Activated T-helper 2 cell treated with anti-CD3 and anti-CD28 coated beads, Interferon-gamma antibody, Interleukin-2, Interleukin-4, amounts not matched to agents 10 μg/mL and 5 μg/mL and 100 μg/mL, durations not matched to agents 14 hours and 24 hours and 36 hours (primary cell): ENCODE measurements at regions of chr6 and their contacts with region 1.

Region 1: GRCh38 chr6:109382576-109383437 is 540 bp upstream of the CD164 start:
- DNase-seq: peak; percentile 92
- H3K4me3 Mint-ChIP-seq: peak overlapping the region; percentile 98
- H3K27ac Mint-ChIP-seq: peak overlapping the region; percentile 99
- H3K4me1 Mint-ChIP-seq: peaks cover 39% of the 10 kb centered on the region
- H3K27me3 Mint-ChIP-seq: peaks cover 3% of the 10 kb centered on the region

Region 2: GRCh38 chr6:107459283-107460082 is 1923.3 kb before region 1 on chr6 and contains the start of gene PDSS2:
- intact Hi-C with region 1: loop called (anchors 5 kb)
- DNase-seq: peak; percentile 96
- H3K4me3 Mint-ChIP-seq: peak within 1 kb of the TSS; percentile 95
- H3K27ac Mint-ChIP-seq: peak within 1 kb of the TSS; percentile 88
- H3K4me1 Mint-ChIP-seq: peaks cover 13% of the 10 kb centered on the region
- H3K27me3 Mint-ChIP-seq: peaks cover 2% of the 10 kb centered on the region
- total RNA-seq, gene PDSS2: 13.0 and 14.4 TPM in 2 replicates

Region 3: GRCh38 chr6:108558372-108559096 is 824.3 kb before region 1 on chr6:
- intact Hi-C with region 1: loop called (anchors 2 kb)
- DNase-seq: peak; percentile 95
- H3K4me3 Mint-ChIP-seq: peak overlapping the region; percentile 87
- H3K27ac Mint-ChIP-seq: peak overlapping the region; percentile 93
- H3K4me1 Mint-ChIP-seq: peaks cover 16% of the 10 kb centered on the region
- H3K27me3 Mint-ChIP-seq: peaks cover 46% of the 10 kb centered on the region

Region 4: GRCh38 chr6:109009236-109009961 is 373.4 kb before region 1 on chr6:
- intact Hi-C with region 1: loop called (anchors 1 kb)
- DNase-seq: peak; percentile 84
- H3K4me3 Mint-ChIP-seq: peak overlapping the region; percentile 89
- H3K27ac Mint-ChIP-seq: peak overlapping the region; percentile 84
- H3K4me1 Mint-ChIP-seq: peaks cover 54% of the 10 kb centered on the region
- H3K27me3 Mint-ChIP-seq: no peaks in the 10 kb centered on the region

Region 5: GRCh38 chr6:109236115-109237076 is 146.4 kb before region 1 on chr6:
- intact Hi-C with region 1: loop called (anchors 2 kb)
- DNase-seq: peak; percentile 42
- H3K4me3 Mint-ChIP-seq: peak overlapping the region; percentile 59
- H3K27ac Mint-ChIP-seq: peak overlapping the region; percentile 79
- H3K4me1 Mint-ChIP-seq: peaks cover 18% of the 10 kb centered on the region
- H3K27me3 Mint-ChIP-seq: no peaks in the 10 kb centered on the region

Region 6: GRCh38 chr6:109318328-109318876 is 64.4 kb before region 1 on chr6:
- intact Hi-C with region 1: no loop called
- DNase-seq: no peak
- H3K4me3 Mint-ChIP-seq: no peak overlapping the region
- H3K27ac Mint-ChIP-seq: no peak overlapping the region
- H3K4me1 Mint-ChIP-seq: peaks cover 8% of the 10 kb centered on the region
- H3K27me3 Mint-ChIP-seq: no peaks in the 10 kb centered on the region

Region 7: DNA sequence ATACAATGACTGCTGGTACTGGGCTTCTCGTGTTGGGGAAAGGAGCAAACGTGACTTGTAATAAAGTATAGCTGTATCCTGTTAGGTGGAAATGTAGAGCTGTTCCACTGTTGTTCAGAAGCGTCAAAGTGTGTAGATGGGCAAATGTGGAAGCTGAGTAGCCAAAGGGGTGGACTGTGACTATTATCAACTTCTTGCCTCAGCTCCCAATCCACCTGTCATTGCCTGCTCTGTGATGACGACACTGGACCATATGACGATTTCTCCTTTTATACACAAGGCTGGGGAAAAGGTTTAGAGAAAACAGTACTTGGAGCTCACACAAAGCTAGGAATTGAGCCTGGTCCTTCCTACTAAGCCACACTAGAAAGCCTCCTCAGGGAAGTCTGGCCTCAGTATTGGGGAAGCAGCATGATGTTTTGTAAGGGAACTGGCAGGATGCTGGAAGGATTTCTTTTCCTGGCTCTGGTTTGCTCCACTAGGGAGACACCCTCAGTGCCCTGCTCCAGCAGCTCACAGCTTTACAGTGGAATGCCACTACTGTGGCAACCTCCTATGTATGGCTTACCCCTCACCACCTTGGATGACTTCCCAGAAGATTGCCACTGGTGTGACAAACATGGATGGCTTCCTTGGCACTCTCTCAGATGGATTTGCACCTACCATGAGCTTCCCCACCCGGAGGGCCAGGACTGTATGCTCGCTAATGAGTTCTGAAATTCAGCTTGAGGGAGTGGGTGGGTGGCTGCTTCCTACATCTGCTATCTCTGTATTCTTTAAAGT is 20.5 kb before region 1 on chr6:
- intact Hi-C with region 1: no loop called
- DNase-seq: no peak
- H3K4me3 Mint-ChIP-seq: no peak overlapping the region
- H3K27ac Mint-ChIP-seq: no peak overlapping the region
- H3K4me1 Mint-ChIP-seq: peaks cover 21% of the 10 kb centered on the region
- H3K27me3 Mint-ChIP-seq: no peaks in the 10 kb centered on the region

Region 8: GRCh38 chr6:109428889-109429477 is 46.2 kb after region 1 on chr6:
- intact Hi-C with region 1: no loop called
- DNase-seq: no peak
- H3K4me3 Mint-ChIP-seq: no peak overlapping the region
- H3K27ac Mint-ChIP-seq: no peak overlapping the region
- H3K4me1 Mint-ChIP-seq: peaks cover 8% of the 10 kb centered on the region
- H3K27me3 Mint-ChIP-seq: peaks cover 22% of the 10 kb centered on the region

Region 9: DNA sequence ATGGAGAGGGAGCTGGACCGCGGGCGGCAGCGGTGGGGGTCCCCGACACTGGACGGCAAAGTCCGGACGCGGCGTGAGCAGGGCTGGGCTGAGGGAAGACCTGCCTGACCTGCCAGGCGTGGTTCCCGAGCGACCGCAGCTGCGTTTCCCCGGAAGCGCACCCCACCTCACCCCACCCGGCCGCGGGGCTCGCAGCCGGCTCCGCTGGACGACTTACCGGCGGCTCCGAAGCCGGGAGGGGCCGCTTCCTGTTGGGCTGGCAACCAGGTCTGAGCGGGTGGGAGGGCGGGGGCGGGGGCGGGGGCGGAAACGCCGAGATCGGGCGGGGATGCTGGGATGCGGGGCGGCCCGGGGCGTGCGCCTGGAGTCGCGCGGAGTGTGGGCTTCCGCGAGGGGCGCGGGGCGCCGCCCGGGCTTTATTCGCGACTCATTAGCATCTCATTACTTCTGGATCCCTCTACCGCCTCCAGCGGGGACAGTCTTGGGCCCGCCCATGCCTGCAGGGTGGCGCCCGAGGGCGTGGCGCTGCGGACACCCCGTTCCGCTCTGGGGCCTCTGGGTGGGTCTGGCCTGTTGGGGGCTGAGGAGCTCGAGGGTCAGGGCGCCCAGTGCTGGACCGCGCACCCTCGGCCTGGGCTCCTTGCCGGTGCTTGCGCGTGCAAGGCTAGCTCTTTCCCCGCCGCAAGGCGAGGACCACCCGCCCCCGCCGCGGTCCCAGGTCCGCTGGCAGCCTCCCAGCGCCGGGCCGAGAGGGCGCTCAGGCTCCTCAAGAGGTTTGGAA is 72.9 kb after region 1 on chr6 and contains the start of gene MICAL1:
- intact Hi-C with region 1: loop called (anchors 1 kb)
- DNase-seq: peak; percentile 78
- H3K4me3 Mint-ChIP-seq: peak within 1 kb of the TSS; percentile 97
- H3K27ac Mint-ChIP-seq: peak within 1 kb of the TSS; percentile 94
- H3K4me1 Mint-ChIP-seq: peaks cover 60% of the 10 kb centered on the region
- H3K27me3 Mint-ChIP-seq: no peaks in the 10 kb centered on the region
- total RNA-seq, gene MICAL1: 47.8 and 51.8 TPM in 2 replicates

Region 10: DNA sequence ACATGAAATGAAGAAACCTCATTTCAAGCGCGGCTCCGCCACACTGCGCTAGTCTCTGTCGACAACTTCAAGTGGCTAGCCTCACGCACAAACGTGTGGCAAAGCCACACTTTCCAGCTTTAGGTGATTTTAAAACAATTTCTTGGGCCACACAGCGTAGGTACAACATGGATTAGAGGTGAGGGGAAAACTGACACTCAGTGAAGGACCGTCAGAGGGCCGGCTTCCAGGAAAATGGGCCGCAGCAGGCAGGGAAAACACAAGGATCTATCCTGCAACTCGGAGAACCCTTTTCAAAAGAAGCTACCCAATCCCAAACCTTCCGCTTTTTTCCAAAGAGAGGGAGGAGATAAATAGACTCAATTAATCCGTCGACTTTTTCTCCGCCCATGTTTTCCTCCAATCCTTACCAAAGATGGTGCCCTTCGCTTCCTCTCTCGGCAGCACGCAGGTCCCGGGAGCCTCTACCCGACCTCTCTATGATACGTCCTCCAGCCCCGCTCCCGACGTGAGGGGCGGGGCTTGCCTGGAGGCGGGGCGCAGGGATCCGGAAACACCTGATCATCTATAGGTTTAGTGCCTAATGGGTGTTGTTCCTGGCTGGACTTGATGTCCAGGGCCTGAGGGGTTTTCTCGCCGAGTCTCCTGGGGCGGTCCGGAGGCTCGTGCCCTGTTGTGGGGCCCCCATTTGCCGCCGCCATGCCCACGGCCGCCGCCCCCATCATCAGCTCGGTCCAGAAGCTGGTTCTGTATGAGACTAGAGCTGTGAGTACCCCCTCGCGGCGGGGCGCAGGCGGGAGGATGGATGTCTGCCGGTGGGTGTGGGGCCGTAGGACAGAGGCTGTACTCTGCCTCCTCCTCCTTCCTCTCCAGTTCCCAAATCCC is 308.2 kb after region 1 on chr6 and contains the starts of genes AK9 and FIG4:
- intact Hi-C with region 1: loop called (anchors 1 kb)
- DNase-seq: peak; percentile 84
- H3K4me3 Mint-ChIP-seq: peak within 1 kb of the TSS; percentile 96
- H3K27ac Mint-ChIP-seq: peak within 1 kb of the TSS; percentile 86
- H3K4me1 Mint-ChIP-seq: peaks cover 26% of the 10 kb centered on the region
- H3K27me3 Mint-ChIP-seq: peaks cover 10% of the 10 kb centered on the region
- total RNA-seq, gene AK9: 3.1 and 3.8 TPM in 2 replicates
- total RNA-seq, gene FIG4: 8.8 and 9.5 TPM in 2 replicates